AG04450 (cell line): ENCODE measurements at regions of chr12 and their contacts with region 1.

Region 1: DNA sequence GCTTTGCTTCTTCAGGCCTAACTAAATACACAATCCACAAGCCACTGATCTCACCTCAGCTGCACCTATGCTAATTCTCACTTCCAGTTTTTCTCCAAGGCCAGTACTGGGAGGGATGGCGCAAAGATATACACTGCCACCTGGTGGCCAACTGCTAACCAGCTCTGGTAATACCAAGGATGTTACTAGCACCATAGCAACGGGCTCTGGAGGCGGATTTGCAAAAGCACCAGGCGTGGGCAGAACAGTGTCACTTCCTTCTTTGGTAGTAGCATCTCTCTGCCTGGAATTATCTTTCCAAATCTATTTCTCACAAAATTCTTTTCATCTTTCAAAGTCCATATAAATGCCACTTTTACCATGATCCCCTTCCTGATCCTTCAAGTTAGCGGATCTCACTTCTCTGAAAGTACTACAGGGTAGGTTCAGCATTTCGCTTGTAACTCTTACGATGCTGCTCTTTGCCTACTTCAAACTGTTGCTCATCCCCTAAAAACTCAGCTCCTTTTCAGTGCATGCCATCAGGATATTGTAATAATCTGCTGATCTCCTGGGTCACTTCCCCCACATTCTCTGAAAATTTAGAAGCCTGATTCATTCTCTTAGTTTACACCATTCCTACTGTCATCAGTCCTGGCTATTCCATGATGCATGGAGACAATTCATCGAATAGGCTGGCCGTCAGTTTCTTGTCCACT is 37.1 kb upstream of the FOXJ2 start:
- DNase-seq: peak; percentile 68
- H3K4me3 ChIP-seq: peak overlapping the region; percentile 23; the same call in 1 of the 2 replicates
- H3K27ac ChIP-seq: peak overlapping the region; percentile 96
- H3K27me3 ChIP-seq: no peaks in the 10 kb centered on the region
- CTCF ChIP-seq: peak; percentile 76

Region 2: DNA sequence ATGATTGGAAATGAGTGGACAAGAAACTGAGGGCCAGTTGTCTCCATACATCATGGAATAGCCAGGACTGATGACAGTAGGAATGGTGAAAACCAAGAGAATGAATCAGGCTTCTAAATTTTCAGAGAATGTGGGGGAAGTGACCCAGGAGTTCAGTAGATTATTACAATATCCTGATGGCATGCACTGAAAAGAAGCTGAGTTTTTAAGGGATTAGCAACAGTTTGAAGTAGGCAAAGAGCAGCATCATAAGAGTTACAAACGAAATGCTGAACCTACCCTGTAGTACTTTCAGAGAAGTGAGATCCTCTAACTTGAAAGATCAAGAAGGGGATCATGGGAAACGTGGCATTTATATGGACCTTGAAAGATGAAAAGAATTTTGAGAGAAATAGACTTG is 135.9 kb before region 1 on chr12:
- CTCF ChIA-PET with region 1: interaction called, 10 read pairs
- POLR2A ChIA-PET with region 1: interaction called, 8 read pairs
- DNase-seq: peak; percentile 43
- H3K4me3 ChIP-seq: no peak overlapping the region; the same call in 1 of the 2 replicates
- H3K27ac ChIP-seq: peak overlapping the region; percentile 98
- H3K27me3 ChIP-seq: no peaks in the 10 kb centered on the region
- CTCF ChIP-seq: no peak

Region 3: GRCh38 chr12:7959701-7960121 is 35.7 kb before region 1 on chr12:
- CTCF ChIA-PET with region 1: interaction called, 18 read pairs
- POLR2A ChIA-PET with region 1: interaction called, 9 read pairs
- DNase-seq: no peak
- H3K4me3 ChIP-seq: no peak overlapping the region
- H3K27ac ChIP-seq: no peak overlapping the region
- H3K27me3 ChIP-seq: no peaks in the 10 kb centered on the region
- CTCF ChIP-seq: no peak

Region 4: GRCh38 chr12:7970475-7971252 is 24.8 kb before region 1 on chr12:
- CTCF ChIA-PET with region 1: interaction called, 12 read pairs
- POLR2A ChIA-PET with region 1: interaction called, 14 read pairs
- DNase-seq: peak; percentile 68
- H3K4me3 ChIP-seq: peak overlapping the region; percentile 58
- H3K27ac ChIP-seq: peak overlapping the region; percentile 89
- H3K27me3 ChIP-seq: no peaks in the 10 kb centered on the region
- CTCF ChIP-seq: no peak; the same call in 1 of the 2 replicates

Region 5: DNA sequence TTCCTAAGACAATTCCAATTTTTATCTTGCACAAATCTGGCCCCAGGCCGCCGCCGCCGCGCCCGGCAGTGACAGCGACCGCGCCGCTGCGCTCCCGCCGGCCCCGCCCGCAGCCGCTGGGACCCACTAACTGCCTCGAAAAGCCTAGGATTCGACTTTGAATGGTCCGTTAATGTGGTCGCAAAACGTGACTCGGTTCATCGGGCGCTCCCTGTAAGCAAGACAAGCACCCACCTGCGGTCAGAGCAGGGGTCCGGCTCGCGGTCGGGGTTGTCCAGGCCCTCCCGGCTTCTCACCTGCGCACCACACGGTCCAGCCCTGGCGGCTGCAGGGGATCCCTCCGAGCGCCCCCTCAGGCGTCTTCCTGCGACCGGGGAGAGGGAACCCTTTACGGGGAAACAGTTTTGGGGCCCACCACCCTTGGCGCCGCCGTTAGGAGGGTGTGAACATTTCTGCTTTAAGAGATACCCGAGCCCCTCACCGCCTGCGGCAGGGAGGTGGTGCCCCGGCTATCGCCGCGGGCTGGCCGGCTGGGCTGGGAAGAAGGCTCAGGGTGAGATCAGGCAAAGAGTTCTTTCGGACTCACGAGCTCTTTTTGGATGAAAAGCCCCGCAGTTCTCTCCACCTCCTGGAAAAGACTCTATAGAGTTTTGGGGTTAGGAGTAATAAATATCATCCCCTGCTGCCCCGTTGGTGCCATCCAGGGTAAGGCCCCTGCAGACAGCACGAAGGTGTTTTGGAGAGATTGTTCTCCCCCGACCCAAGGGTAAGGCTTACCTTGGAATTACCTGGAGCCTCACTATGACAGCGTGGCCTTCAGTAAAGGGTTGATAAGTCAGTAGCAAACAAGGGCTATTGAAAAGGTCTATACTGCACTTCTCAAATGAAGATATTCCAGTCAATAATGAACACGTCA is 23.5 kb after region 1 on chr12:
- CTCF ChIA-PET with region 1: no interaction called
- POLR2A ChIA-PET with region 1: no interaction called
- DNase-seq: no peak
- H3K4me3 ChIP-seq: peak overlapping the region; percentile 46
- H3K27ac ChIP-seq: no peak overlapping the region
- H3K27me3 ChIP-seq: peaks cover 20% of the 10 kb centered on the region
- CTCF ChIP-seq: no peak

Region 6: DNA sequence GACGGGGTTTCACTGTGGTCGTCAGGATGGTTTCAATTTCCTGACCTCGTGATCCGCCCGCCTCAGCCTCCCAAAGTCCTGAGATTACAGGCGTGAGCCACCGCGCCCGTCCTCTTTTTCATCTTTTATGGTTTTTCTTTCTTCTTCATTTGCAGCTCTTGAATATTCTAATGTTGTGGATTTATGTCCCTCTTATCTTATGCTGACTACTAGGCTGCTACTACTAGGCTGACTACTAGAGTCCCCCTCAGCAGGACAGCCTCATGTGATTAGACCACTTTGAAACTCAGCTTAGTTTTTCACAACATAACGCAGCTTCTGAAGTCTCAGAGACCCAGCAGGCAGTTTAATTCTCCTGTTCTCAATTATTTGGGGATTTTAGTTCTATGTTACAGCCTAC is 546.1 kb after region 1 on chr12:
- CTCF ChIA-PET with region 1: no interaction called
- POLR2A ChIA-PET with region 1: no interaction called
- DNase-seq: no peak
- H3K4me3 ChIP-seq: no peak overlapping the region
- H3K27ac ChIP-seq: no peak overlapping the region
- H3K27me3 ChIP-seq: no peaks in the 10 kb centered on the region
- CTCF ChIP-seq: no peak